IMR-90 (cell line): ENCODE measurements at regions of chr6 and their contacts with region 1.

Region 1: DNA sequence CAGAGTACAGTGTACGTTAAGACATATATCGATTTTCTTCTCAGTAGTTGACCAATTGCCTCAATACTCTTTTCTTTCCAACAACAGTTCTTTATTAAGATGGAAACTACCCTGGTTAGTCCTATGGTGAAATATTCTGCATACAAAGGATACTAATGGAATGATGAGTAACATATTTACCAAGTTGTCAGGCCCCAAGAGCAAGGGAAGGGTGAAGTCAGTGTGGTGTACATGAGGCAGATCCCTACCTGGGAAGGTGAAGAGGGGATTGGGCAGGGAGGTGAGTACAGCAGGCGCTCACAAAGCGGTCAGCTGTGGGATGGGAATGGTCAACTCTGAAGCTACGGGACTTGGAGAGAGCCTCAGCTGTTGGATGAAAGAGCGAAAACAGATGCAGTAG is 29.7 kb downstream of the GJA1 start:
- DNase-seq: no peak
- ATAC-seq: no peak
- H3K4me3 ChIP-seq: no peak overlapping the region
- H3K27ac ChIP-seq: no peak overlapping the region
- H3K4me1 ChIP-seq: no peaks in the 10 kb centered on the region
- H3K27me3 ChIP-seq: no peaks in the 10 kb centered on the region
- CTCF ChIP-seq: no peak
- POLR2A ChIP-seq: no peak
- RAD21 ChIP-seq: no peak

Region 2: DNA sequence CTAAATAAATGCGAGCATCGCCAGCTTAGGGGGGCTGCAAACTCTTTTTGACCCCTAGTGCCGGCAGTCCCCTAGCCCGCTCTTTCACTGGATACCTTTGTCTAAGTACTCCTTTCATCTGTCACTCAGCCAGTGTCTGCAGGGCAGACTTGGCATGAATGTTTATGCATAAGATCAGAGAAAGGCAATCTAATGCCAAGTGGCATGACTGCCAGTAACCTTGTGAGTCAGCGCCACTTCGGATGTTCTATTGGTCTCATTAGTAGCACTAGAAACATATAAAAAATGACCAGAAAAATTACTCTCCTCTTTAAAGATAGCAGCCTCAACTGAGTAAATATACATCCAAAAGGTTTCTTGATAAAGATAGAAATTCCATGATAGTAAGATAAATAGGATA is 323.0 kb before region 1 on chr6:
- CTCF ChIA-PET with region 1: no interaction called
- POLR2A ChIA-PET with region 1: no interaction called
- dilution Hi-C with region 1: no loop called
- in situ Hi-C with region 1: no loop called
- intact Hi-C with region 1: no loop called
- DNase-seq: no peak
- ATAC-seq: no peak
- H3K4me3 ChIP-seq: no peak overlapping the region
- H3K27ac ChIP-seq: no peak overlapping the region
- H3K4me1 ChIP-seq: no peaks in the 10 kb centered on the region
- H3K27me3 ChIP-seq: no peaks in the 10 kb centered on the region
- CTCF ChIP-seq: no peak
- POLR2A ChIP-seq: no peak
- RAD21 ChIP-seq: no peak

Region 3: GRCh38 chr6:121187200-121188145 is 277.6 kb before region 1 on chr6:
- CTCF ChIA-PET with region 1: no interaction called
- POLR2A ChIA-PET with region 1: no interaction called
- dilution Hi-C with region 1: no loop called
- in situ Hi-C with region 1: no loop called
- intact Hi-C with region 1: no loop called
- DNase-seq: no peak
- ATAC-seq: no peak
- H3K4me3 ChIP-seq: no peak overlapping the region
- H3K27ac ChIP-seq: no peak overlapping the region
- H3K4me1 ChIP-seq: no peaks in the 10 kb centered on the region
- H3K27me3 ChIP-seq: no peaks in the 10 kb centered on the region
- CTCF ChIP-seq: no peak
- POLR2A ChIP-seq: no peak
- RAD21 ChIP-seq: no peak

Region 4: GRCh38 chr6:121479496-121480402 is 14.6 kb after region 1 on chr6:
- CTCF ChIA-PET with region 1: interaction called, 3 read pairs
- POLR2A ChIA-PET with region 1: interaction called, 14 read pairs
- dilution Hi-C with region 1: no loop called
- in situ Hi-C with region 1: no loop called
- intact Hi-C with region 1: no loop called
- DNase-seq: no peak
- ATAC-seq: no peak
- H3K4me3 ChIP-seq: no peak overlapping the region
- H3K27ac ChIP-seq: no peak overlapping the region
- H3K4me1 ChIP-seq: peaks cover 2% of the 10 kb centered on the region; the same call in 1 of the 2 replicates
- H3K27me3 ChIP-seq: no peaks in the 10 kb centered on the region
- CTCF ChIP-seq: no peak
- POLR2A ChIP-seq: no peak
- RAD21 ChIP-seq: no peak

Region 5: GRCh38 chr6:121666814-121667213 is 201.7 kb after region 1 on chr6:
- CTCF ChIA-PET with region 1: no interaction called
- POLR2A ChIA-PET with region 1: interaction called, 12 read pairs
- dilution Hi-C with region 1: no loop called
- in situ Hi-C with region 1: no loop called
- intact Hi-C with region 1: no loop called
- DNase-seq: peak; percentile 93
- ATAC-seq: peak; percentile 85
- H3K4me3 ChIP-seq: no peak overlapping the region
- H3K27ac ChIP-seq: no peak overlapping the region
- H3K4me1 ChIP-seq: peaks cover 9% of the 10 kb centered on the region
- H3K27me3 ChIP-seq: no peaks in the 10 kb centered on the region
- CTCF ChIP-seq: no peak
- POLR2A ChIP-seq: no peak
- RAD21 ChIP-seq: no peak